ENCODE measurements at regions of chr10 and their contacts with region 1.

Region 1: GRCh38 chr10:73920089-73920488 is 9.2 kb downstream of the PLAU start:
- DNase-seq: peak in 4 of 9 donors; percentile 16 to 41 (median 37)
- ATAC-seq: peak; percentile 72
- H3K4me3 ChIP-seq: no peak overlapping the region
- H3K4me3 Mint-ChIP-seq: peak overlapping the region in 9 of 10 donors; percentile 1 to 58 (median 30)
- H3K27ac ChIP-seq: no peak overlapping the region
- H3K27ac Mint-ChIP-seq: peak overlapping the region in 1 of 9 donors; percentile 46
- H3K4me1 ChIP-seq: peaks cover 12 to 25% of the 10 kb centered on the region in 2 donors
- H3K4me1 Mint-ChIP-seq: peaks cover 29 to 45% (median 38%) of the 10 kb centered on the region in 7 donors
- H3K27me3 ChIP-seq: peaks cover 0 to 5% of the 10 kb centered on the region in 2 donors
- H3K27me3 Mint-ChIP-seq: peaks cover 15 to 53% (median 23%) of the 10 kb centered on the region in 5 donors

Region 2: DNA sequence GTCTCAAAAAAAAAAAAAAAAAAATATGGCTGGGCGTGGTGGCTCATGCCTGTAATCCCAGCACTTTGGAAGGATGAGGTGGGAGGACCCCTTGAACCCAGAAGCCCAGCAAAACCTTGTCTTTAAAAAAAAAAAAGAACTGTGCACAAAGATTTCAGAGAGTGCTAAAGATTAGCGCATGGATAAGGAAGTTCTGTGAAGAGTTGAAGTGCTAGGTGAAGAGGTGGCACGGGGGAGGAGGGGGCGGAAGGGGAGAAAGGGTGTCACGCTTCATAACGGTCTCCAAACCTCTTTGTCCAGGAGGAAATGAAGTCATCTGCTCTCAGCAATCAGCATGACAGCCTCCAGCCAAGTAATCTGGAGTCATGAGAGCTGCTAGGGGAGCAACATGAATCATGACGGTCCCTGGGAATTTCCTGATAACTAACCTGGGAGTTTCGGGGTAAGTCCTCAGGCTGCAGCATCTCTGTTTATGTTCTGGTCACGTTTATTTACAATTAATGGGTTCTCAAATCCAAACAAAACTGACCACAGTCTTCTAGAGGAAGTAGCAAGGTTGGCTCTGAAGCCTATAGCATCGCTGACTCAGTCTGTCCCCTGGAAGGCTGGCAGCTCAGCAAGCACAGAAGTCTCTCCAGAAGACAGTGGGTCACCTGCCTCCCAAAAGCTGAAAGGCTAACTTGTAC is 11.1 kb before region 1 on chr10:
- CTCF ChIA-PET with region 1: interaction called, 3 read pairs
- POLR2A ChIA-PET with region 1: interaction called, 3 read pairs
- intact Hi-C with region 1: loop called (anchors 1 kb)
- DNase-seq: peak in 3 of 9 donors; percentile 20 to 59 (median 21)
- ATAC-seq: peak; percentile 68
- H3K4me3 ChIP-seq: no peak overlapping the region
- H3K4me3 Mint-ChIP-seq: peak overlapping the region in 7 of 10 donors; percentile 7 to 69 (median 37)
- H3K27ac ChIP-seq: no peak overlapping the region
- H3K27ac Mint-ChIP-seq: peak overlapping the region in 1 of 9 donors; percentile 14
- H3K4me1 ChIP-seq: peaks cover 14 to 15% of the 10 kb centered on the region in 2 donors
- H3K4me1 Mint-ChIP-seq: peaks cover 15 to 46% (median 30%) of the 10 kb centered on the region in 7 donors
- H3K27me3 ChIP-seq: peaks cover 10 to 21% of the 10 kb centered on the region in 2 donors
- H3K27me3 Mint-ChIP-seq: peaks cover 49 to 70% (median 61%) of the 10 kb centered on the region in 5 donors

Region 3: GRCh38 chr10:73931767-73932619 is 11.9 kb after region 1 on chr10:
- CTCF ChIA-PET with region 1: no interaction called
- POLR2A ChIA-PET with region 1: interaction called, 4 read pairs
- intact Hi-C with region 1: loop called in 1 of 2 experiments (anchors 1 kb)
- DNase-seq: peak in 5 of 9 donors; percentile 10 to 55 (median 26)
- ATAC-seq: peak; percentile 75
- H3K4me3 ChIP-seq: no peak overlapping the region
- H3K4me3 Mint-ChIP-seq: peak overlapping the region in 1 of 10 donors; percentile 45
- H3K27ac ChIP-seq: no peak overlapping the region
- H3K27ac Mint-ChIP-seq: peak overlapping the region in 1 of 9 donors; percentile 85
- H3K4me1 ChIP-seq: no peaks in the 10 kb centered on the region
- H3K4me1 Mint-ChIP-seq: peaks cover 6 to 22% (median 11%) of the 10 kb centered on the region in 7 donors
- H3K27me3 ChIP-seq: no peaks in the 10 kb centered on the region
- H3K27me3 Mint-ChIP-seq: peaks cover 10 to 20% (median 14%) of the 10 kb centered on the region in 5 donors

Measured in naive thymus-derived CD4-positive, alpha-beta T cell (primary cell).